Activated CD4-positive, alpha-beta T cell treated with anti-CD3 and anti-CD28 coated beads for 36 hours (primary cell): ENCODE measurements at regions of chr11 and their contacts with region 1.

Region 1: GRCh38 chr11:33161120-33162005 is at the start of gene CSTF3:
- DNase-seq: peak; percentile 99
- ATAC-seq: peak; percentile 97
- H3K4me3 Mint-ChIP-seq: peak within 1 kb of the TSS; percentile 96
- H3K27ac Mint-ChIP-seq: peak within 1 kb of the TSS; percentile 100
- H3K4me1 Mint-ChIP-seq: peaks cover 43% of the 10 kb centered on the region
- H3K27me3 Mint-ChIP-seq: no peaks in the 10 kb centered on the region
- total RNA-seq, gene CSTF3: 29.6 to 35.3 TPM

Region 2: GRCh38 chr11:33015621-33016551 is 145.5 kb before region 1 on chr11 and contains the start of gene DEPDC7:
- CTCF ChIA-PET with region 1: interaction called, 3 read pairs
- POLR2A ChIA-PET with region 1: no interaction called
- intact Hi-C with region 1: loop called in 1 of 2 experiments (anchors 1 kb)
- DNase-seq: peak; percentile 90
- ATAC-seq: peak; percentile 81
- H3K4me3 Mint-ChIP-seq: peak within 1 kb of the TSS; percentile 75
- H3K27ac Mint-ChIP-seq: peak within 1 kb of the TSS; percentile 37
- H3K4me1 Mint-ChIP-seq: peaks cover 43% of the 10 kb centered on the region
- H3K27me3 Mint-ChIP-seq: peaks cover 29% of the 10 kb centered on the region
- total RNA-seq, gene DEPDC7: 2.0 to 2.3 TPM

Region 3: DNA sequence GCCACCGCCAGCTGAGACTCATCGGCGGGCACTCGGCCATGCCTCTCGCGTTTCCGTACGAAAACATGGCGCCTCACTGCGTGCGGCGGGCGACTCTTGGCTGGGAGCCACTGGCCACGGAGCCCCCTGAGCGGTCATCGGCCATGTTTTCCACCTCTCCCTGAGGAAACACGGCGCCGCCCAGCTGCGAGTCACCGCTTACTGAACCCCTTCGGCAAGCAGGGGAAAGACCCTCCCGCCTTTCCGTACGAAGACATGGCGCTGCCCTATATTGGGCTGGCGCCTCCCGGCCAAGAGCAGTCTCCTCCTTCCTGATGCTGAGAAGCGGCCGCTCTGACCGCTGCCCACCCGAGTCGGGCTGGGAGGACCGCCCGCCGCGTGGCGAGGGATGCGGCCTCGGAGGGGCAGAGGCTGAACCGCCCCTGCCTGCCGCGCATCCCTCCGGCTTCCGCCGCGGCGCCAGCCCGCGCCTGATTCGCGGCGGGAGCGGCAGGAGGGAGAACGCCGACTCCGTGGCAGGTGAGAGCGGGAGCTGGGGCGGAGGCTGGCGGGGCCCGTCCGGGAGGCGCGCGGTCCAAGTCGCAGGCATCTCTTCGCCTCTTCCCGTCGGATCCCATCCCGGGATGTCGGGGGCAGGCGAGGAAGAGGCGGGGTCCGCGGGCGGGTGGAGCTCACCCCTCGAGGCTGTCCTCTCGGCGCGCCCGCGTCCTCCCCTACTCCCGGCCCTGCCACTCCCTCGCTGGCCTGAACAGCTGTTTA is 121.9 kb before region 1 on chr11 and contains the start of gene TCP11L1:
- CTCF ChIA-PET with region 1: interaction called, 5 read pairs
- POLR2A ChIA-PET with region 1: no interaction called
- intact Hi-C with region 1: loop called in 1 of 2 experiments (anchors 1 kb)
- DNase-seq: peak; percentile 89
- ATAC-seq: peak; percentile 71
- H3K4me3 Mint-ChIP-seq: peak within 1 kb of the TSS; percentile 87
- H3K27ac Mint-ChIP-seq: peak within 1 kb of the TSS; percentile 95
- H3K4me1 Mint-ChIP-seq: peaks cover 37% of the 10 kb centered on the region
- H3K27me3 Mint-ChIP-seq: peaks cover 5% of the 10 kb centered on the region
- total RNA-seq, gene TCP11L1: 7.9 to 8.8 TPM

Region 4: GRCh38 chr11:33329705-33330329 is 168.5 kb after region 1 on chr11:
- CTCF ChIA-PET with region 1: interaction called, 27 read pairs
- POLR2A ChIA-PET with region 1: no interaction called
- intact Hi-C with region 1: loop called (anchors 1 kb)
- DNase-seq: peak; percentile 57
- ATAC-seq: peak; percentile 78
- H3K4me3 Mint-ChIP-seq: no peak overlapping the region
- H3K27ac Mint-ChIP-seq: no peak overlapping the region
- H3K4me1 Mint-ChIP-seq: peaks cover 12% of the 10 kb centered on the region
- H3K27me3 Mint-ChIP-seq: no peaks in the 10 kb centered on the region

Region 5: DNA sequence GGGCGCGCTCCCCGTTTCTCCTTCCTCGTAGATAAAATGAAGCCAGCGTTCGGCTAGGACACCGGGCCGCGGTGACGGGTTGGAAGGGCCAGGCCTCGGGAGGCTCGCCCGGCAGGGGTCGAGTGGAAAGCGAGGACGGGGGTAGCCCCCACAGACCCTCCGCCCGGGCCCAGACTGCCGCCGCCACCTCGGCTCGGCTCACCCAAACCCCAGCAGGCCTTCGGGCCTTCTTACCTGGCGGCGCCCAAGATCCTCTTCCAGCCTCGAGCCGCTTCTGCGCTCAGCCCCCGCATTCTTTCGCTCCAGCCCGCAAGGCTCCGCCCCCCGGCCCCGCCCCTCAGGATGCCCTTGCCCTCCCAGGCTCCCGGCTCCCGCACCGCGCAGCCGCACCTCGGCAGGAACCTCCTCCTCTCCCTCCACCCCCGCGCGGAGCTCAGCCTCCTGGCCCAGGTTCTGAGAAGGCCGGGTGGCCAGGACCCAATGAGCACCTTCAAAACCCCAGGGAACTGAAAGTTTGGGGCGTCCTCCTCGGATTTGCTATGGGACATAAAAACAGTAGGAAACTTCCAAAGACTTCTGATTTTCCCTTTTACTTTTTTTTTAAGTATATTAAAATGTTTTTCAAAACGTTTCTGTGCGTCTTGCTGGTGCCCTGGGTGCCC is 574.9 kb after region 1 on chr11 and contains the start of gene CD59:
- CTCF ChIA-PET with region 1: no interaction called
- POLR2A ChIA-PET with region 1: no interaction called
- intact Hi-C with region 1: loop called in 1 of 2 experiments (anchors 10 kb)
- DNase-seq: peak; percentile 95
- ATAC-seq: peak; percentile 74
- H3K4me3 Mint-ChIP-seq: peak within 1 kb of the TSS; percentile 82
- H3K27ac Mint-ChIP-seq: peak within 1 kb of the TSS; percentile 84
- H3K4me1 Mint-ChIP-seq: peaks cover 44% of the 10 kb centered on the region
- H3K27me3 Mint-ChIP-seq: peaks cover 16% of the 10 kb centered on the region
- total RNA-seq, gene CD59: 58.2 to 60.0 TPM

Region 6: DNA sequence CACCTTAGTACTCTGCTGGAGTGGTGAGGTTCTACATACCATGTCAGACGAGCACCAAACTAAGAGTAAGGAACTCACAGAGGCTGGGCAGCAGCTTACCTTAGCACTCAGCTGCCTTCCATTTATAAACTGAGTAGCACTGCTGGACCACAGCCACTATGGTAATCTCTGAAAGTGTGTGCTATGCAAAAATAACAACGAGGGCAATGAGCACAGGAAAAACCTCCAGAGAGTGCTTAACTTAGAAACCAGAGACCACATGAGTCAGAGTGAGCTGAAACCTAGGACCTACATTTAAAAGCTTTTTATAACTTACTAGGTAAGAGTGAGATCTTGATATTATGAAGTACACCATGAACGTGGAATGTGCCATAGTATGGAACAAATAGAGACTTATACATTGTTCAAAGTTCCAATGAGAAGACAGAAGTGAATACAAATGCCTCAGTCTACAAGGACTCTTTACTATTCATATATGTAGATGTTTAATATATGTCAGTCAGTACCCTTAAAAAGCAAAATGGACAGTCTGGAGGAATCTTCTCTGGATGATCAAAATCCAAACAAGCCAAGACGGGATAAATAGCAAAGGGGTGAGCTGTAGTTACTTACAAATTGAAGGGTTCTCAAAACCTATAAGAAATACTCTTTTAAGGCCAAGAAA is 592.1 kb after region 1 on chr11:
- CTCF ChIA-PET with region 1: no interaction called
- POLR2A ChIA-PET with region 1: interaction called, 10 read pairs
- intact Hi-C with region 1: no loop called
- DNase-seq: no peak
- ATAC-seq: peak; percentile 95
- H3K4me3 Mint-ChIP-seq: no peak overlapping the region
- H3K27ac Mint-ChIP-seq: peak overlapping the region; percentile 11
- H3K4me1 Mint-ChIP-seq: peaks cover 8% of the 10 kb centered on the region
- H3K27me3 Mint-ChIP-seq: no peaks in the 10 kb centered on the region

Region 7: GRCh38 chr11:33773987-33774735 is 612.8 kb after region 1 on chr11 and contains the start of gene FBXO3:
- CTCF ChIA-PET with region 1: no interaction called
- POLR2A ChIA-PET with region 1: no interaction called
- intact Hi-C with region 1: loop called in 1 of 2 experiments (anchors 2 kb)
- DNase-seq: peak; percentile 87
- ATAC-seq: peak; percentile 85
- H3K4me3 Mint-ChIP-seq: peak within 1 kb of the TSS; percentile 89
- H3K27ac Mint-ChIP-seq: peak within 1 kb of the TSS; percentile 75
- H3K4me1 Mint-ChIP-seq: peaks cover 44% of the 10 kb centered on the region
- H3K27me3 Mint-ChIP-seq: peaks cover 12% of the 10 kb centered on the region
- total RNA-seq, gene FBXO3: 11.4 to 12.2 TPM